ENCODE measurements at regions of chr15 and their contacts with region 1.

Region 1: DNA sequence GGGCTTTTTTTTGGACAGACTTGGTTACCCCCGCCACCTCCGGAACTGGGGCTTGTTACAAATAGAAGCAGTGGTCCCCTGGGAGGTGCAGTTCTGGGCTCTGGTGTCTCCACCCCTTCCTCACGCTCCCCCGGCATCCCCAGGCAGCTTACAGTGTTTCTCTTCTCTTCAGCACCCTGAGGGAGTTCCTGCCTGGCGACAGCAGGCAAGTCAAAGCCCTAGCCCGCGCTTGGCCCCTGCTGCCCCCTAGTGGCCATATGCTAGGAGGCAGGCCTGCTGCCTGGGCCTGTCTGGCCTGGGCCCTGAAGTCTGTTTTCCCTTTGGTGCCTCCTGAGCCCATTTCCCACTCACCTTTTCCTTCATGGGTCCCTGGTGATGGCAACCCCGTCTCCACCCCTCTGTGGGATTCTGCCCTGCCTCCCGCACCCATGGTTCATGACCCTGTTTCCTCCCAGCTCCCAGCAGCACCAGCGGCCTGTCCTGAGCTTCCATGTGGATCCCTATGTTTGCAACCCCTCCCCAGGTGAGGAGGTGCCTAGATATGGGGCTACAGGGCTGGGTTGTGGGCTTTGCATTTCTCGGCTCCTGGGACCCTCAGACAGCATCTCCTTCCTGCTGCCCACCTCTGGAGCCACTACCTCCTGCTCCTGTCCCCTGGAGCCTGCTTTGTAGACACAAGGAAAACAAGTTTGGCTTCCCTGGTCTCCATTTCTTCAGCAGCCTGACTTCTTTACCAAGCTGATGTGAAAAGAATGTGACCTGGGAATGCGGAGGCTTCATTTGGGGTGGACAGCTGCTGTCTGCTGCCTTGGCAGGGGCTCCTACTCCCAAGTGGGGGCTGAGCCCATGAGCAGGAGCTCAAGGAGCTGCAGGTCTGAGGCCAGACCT is 2.2 kb downstream of the SNX22 start:
- DNase-seq: peak; percentile 90 to 94 (median 92)
- ATAC-seq: peak; percentile 85
- H3K4me3 ChIP-seq: no peak overlapping the region
- H3K27ac ChIP-seq: peak overlapping the region in 3 of 4 donors; percentile 21 to 40 (median 38)
- H3K4me1 ChIP-seq: peaks cover 45% of the 10 kb centered on the region
- H3K27me3 ChIP-seq: no peaks in the 10 kb centered on the region
- CTCF ChIP-seq: peak; percentile 95 to 98 (median 97)
- POLR2A ChIP-seq: peak in 2 of 3 donors; percentile 31 to 52

Region 2: DNA sequence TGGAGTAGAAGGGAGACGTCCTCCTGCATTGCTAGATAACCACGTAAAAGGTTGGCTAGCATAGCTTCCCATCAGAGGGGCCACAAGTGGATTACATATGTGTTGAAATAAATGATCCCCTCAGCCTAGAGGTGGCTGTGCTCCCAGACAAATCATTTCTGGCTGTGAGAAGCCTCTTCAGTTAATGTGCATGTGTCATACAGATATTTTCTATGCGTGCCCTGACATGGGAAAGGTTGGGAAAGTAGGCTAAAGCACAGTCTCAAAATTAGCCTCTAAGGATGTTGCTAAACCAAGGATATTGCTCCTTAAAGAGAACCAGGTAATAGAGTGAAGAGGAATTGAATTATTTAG is 631.5 kb before region 1 on chr15:
- intact Hi-C with region 1: no loop called
- DNase-seq: no peak
- ATAC-seq: no peak
- H3K4me3 ChIP-seq: no peak overlapping the region
- H3K27ac ChIP-seq: no peak overlapping the region
- H3K4me1 ChIP-seq: peaks cover 83% of the 10 kb centered on the region
- H3K27me3 ChIP-seq: no peaks in the 10 kb centered on the region
- CTCF ChIP-seq: no peak
- POLR2A ChIP-seq: no peak

Region 3: GRCh38 chr15:64029110-64029509 is 124.6 kb before region 1 on chr15:
- intact Hi-C with region 1: no loop called
- DNase-seq: no peak
- ATAC-seq: no peak
- H3K4me3 ChIP-seq: no peak overlapping the region
- H3K27ac ChIP-seq: no peak overlapping the region
- H3K4me1 ChIP-seq: peaks cover 17% of the 10 kb centered on the region
- H3K27me3 ChIP-seq: no peaks in the 10 kb centered on the region
- CTCF ChIP-seq: no peak
- POLR2A ChIP-seq: no peak

Region 4: GRCh38 chr15:64093627-64094417 is 59.9 kb before region 1 on chr15 and contains the start of gene CIAO2A:
- intact Hi-C with region 1: loop called (anchors 10 kb)
- DNase-seq: peak; percentile 96 to 99 (median 97)
- ATAC-seq: peak; percentile 91
- H3K4me3 ChIP-seq: peak within 1 kb of the TSS; percentile 30 to 92
- H3K27ac ChIP-seq: peak within 1 kb of the TSS; percentile 76 to 95 (median 88)
- H3K4me1 ChIP-seq: peaks cover 70% of the 10 kb centered on the region
- H3K27me3 ChIP-seq: no peaks in the 10 kb centered on the region
- CTCF ChIP-seq: no peak
- POLR2A ChIP-seq: peak in 2 of 3 donors; percentile 70 to 75
- total RNA-seq, gene CIAO2A: 48.1 to 57.1 TPM

Region 5: GRCh38 chr15:64224511-64224910 is 70.8 kb after region 1 on chr15:
- intact Hi-C with region 1: no loop called
- DNase-seq: peak in 3 of 4 donors; percentile 41 to 52 (median 47)
- ATAC-seq: no peak
- H3K4me3 ChIP-seq: no peak overlapping the region
- H3K27ac ChIP-seq: peak overlapping the region in 2 of 4 donors; percentile 10 to 16
- H3K4me1 ChIP-seq: peaks cover 10% of the 10 kb centered on the region
- H3K27me3 ChIP-seq: no peaks in the 10 kb centered on the region
- CTCF ChIP-seq: no peak
- POLR2A ChIP-seq: no peak

Measured in body of pancreas (tissue), 4 donors.